ENCODE measurements at regions of chr14 and their contacts with region 1.

Region 1: DNA sequence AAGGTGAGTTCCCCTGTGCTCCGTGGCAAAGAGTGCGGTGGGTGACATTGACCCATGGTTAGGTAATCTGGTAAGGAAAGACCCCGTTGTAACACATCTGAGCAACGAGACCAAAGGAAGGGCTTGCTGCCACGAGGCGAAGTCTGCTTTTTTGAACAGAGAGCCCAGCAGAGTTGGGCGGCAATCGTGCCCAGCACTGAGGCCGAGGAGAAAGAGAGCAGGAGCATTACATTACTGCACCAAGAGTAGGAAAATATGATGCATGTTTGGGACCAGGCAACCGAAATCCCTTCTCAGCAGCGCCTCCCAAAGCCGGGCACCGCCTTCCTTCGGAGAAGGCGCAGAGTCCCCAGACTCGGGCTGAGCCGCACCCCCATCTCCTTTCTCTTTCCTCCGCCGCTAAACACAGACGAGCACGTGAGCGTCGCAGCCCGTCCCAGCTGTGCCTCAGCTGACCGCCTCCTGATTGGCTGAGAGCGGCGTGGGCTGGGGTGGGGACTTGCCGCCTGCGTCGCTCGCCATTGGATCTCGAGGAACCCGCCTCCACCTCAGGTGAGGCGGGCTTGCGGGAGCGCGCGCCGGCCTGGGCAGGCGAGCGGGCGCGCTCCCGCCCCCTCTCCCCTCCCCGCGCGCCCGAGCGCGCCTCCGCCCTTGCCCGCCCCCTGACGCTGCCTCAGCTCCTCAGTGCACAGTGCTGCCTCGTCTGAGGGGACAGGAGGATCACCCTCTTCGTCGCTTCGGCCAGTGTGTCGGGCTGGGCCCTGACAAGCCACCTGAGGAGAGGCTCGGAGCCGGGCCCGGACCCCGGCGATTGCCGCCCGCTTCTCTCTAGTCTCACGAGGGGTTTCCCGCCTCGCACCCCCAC is at the start of gene HIF1A:
- DNase-seq: peak; percentile 96 to 97
- ATAC-seq: peak; percentile 97 to 99 (median 98)
- H3K4me3 ChIP-seq: peak within 1 kb of the TSS; percentile 70 to 99 (median 88)
- H3K27ac ChIP-seq: peak within 1 kb of the TSS; percentile 72 to 100 (median 96)
- H3K4me1 ChIP-seq: peaks cover 0 to 43% (median 33%) of the 10 kb centered on the region in 9 donors
- H3K27me3 ChIP-seq: no peaks in the 10 kb centered on the region
- CTCF ChIP-seq: peak in 3 of 9 donors; percentile 16 to 24 (median 19)
- total RNA-seq, gene HIF1A: 52.8 to 97.3 (median 62.9) TPM

Region 2: DNA sequence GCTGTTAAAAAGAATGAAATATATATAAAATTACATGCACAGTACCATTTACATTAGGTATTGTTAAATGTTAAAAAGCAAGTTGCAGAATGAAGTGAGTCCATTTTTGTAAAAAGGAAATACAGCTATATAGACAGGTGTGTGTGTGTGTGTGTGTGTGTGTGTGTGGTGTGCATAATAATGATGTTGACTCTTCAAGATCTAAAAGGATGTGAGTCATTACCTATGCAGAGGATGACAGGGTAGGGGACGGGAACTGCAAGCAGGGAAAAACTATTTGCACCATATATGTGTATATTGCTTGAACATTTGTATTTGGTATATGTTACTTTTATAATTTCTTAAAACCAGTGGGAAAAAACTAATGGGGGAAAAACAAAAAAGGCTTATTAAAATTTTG is 1212.3 kb before region 1 on chr14:
- intact Hi-C with region 1: no loop called
- DNase-seq: no peak
- ATAC-seq: no peak
- H3K4me3 ChIP-seq: no peak overlapping the region
- H3K27ac ChIP-seq: no peak overlapping the region
- H3K4me1 ChIP-seq: peaks cover 0 to 10% (median 6%) of the 10 kb centered on the region in 9 donors
- H3K27me3 ChIP-seq: peaks cover 12 to 68% (median 50%) of the 10 kb centered on the region in 7 donors
- CTCF ChIP-seq: no peak

Region 3: GRCh38 chr14:61512026-61512834 is 182.8 kb before region 1 on chr14:
- intact Hi-C with region 1: loop called in 1 of 10 experiments (anchors 5 kb)
- DNase-seq: no peak
- ATAC-seq: peak in 2 of 8 donors; percentile 36 to 52
- H3K4me3 ChIP-seq: no peak overlapping the region
- H3K27ac ChIP-seq: peak overlapping the region in 4 of 10 donors; percentile 10 to 62 (median 14)
- H3K4me1 ChIP-seq: peaks cover 9 to 84% (median 43%) of the 10 kb centered on the region in 9 donors
- H3K27me3 ChIP-seq: no peaks in the 10 kb centered on the region
- CTCF ChIP-seq: no peak

Region 4: GRCh38 chr14:61553725-61554641 is 141.1 kb before region 1 on chr14:
- intact Hi-C with region 1: no loop called
- DNase-seq: no peak
- ATAC-seq: peak in 2 of 8 donors; percentile 26 to 43
- H3K4me3 ChIP-seq: no peak overlapping the region
- H3K27ac ChIP-seq: peak overlapping the region in 8 of 10 donors; percentile 52 to 92 (median 72)
- H3K4me1 ChIP-seq: peaks cover 0 to 58% (median 21%) of the 10 kb centered on the region in 9 donors
- H3K27me3 ChIP-seq: no peaks in the 10 kb centered on the region
- CTCF ChIP-seq: no peak

Region 5: DNA sequence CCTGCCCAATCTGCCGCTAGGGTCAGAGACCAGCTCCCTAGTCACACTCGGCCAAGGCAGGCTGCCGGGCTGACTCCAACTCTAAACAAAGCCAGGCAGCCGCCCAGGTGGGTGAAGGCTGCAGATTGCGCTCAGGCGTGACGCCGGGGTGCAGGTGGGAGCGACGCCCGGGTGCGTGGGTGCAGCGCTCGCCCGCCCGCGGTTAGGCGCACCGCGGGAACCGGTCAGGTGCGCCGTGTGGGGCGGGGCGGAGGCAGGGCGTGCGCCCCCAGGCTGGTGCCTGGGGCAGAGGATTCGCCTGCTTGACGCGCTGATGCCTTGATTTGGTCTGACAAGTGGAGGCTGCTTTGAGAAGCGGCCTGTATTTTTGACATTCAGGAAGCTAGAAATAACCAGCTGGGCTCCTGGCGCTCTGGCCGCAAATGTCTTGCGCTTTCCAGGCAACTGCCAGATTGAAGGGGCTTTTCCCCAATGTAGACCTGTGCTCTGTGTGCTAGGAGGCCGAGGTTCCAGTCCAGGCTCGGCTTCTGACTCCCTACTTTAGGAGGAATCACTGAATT is 126.4 kb before region 1 on chr14:
- intact Hi-C with region 1: loop called in 4 of 10 experiments (anchors 2 to 10 kb)
- DNase-seq: peak in 1 of 2 donors; percentile 37
- ATAC-seq: peak; percentile 49 to 84 (median 64)
- H3K4me3 ChIP-seq: peak overlapping the region in 8 of 10 donors; percentile 7 to 44 (median 38)
- H3K27ac ChIP-seq: peak overlapping the region; percentile 50 to 91 (median 77)
- H3K4me1 ChIP-seq: peaks cover 9 to 100% (median 53%) of the 10 kb centered on the region in 9 donors
- H3K27me3 ChIP-seq: no peaks in the 10 kb centered on the region
- CTCF ChIP-seq: peak in 3 of 9 donors; percentile 16 to 24 (median 24)

Region 6: GRCh38 chr14:61609191-61609843 is 85.7 kb before region 1 on chr14:
- intact Hi-C with region 1: loop called in 1 of 10 experiments (anchors 10 kb)
- DNase-seq: no peak
- ATAC-seq: peak; percentile 27 to 84 (median 58)
- H3K4me3 ChIP-seq: no peak overlapping the region
- H3K27ac ChIP-seq: peak overlapping the region in 3 of 10 donors; percentile 35 to 58 (median 41)
- H3K4me1 ChIP-seq: peaks cover 0 to 30% (median 15%) of the 10 kb centered on the region in 9 donors
- H3K27me3 ChIP-seq: no peaks in the 10 kb centered on the region
- CTCF ChIP-seq: no peak

Region 7: DNA sequence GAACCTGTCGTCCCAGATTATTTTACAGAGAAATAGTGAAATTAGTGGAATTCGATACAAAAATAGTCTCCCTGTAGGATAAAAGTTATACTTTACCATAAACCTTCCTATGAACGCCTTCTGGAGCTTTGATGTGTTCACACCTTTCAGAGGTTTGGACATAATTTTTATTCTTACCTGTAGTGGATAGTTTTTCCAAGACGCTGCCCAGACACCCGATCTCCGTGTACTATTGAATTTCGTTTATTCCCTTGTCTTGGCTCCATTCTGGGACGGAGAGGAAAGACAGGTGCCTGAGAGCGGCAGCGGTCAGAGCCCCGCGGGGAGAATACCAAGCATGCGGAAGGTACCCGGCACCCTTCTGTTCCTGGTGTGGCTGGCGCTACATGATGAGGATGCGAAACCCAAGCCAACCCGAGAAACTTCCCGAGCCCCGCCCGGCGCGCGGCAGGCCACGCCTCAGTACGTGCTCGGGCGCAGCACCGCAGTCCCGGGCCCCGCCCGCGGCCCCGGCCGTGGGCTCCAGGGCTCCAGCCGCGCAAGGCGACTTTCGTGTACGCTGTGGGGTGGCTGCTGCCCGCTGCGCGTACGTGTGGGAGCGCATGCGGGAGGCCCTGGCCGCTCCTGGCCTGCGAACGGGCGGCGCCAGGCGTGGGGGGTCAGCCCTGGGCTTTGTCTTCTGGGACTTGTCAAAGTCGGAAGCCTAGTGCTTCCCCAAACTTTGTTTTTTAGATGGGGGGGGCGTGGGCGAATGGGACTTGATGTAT is 55.8 kb after region 1 on chr14:
- intact Hi-C with region 1: loop called in 1 of 10 experiments (anchors 5 kb)
- DNase-seq: peak; percentile 88 to 90
- ATAC-seq: peak; percentile 96 to 98 (median 98)
- H3K4me3 ChIP-seq: peak overlapping the region; percentile 3 to 82 (median 65)
- H3K27ac ChIP-seq: peak overlapping the region; percentile 87 to 97 (median 93)
- H3K4me1 ChIP-seq: peaks cover 0 to 63% (median 36%) of the 10 kb centered on the region in 9 donors
- H3K27me3 ChIP-seq: no peaks in the 10 kb centered on the region
- CTCF ChIP-seq: no peak

Region 8: GRCh38 chr14:61803755-61804154 is 108.7 kb after region 1 on chr14:
- intact Hi-C with region 1: no loop called
- DNase-seq: no peak
- ATAC-seq: no peak
- H3K4me3 ChIP-seq: no peak overlapping the region
- H3K27ac ChIP-seq: no peak overlapping the region
- H3K4me1 ChIP-seq: no peaks in the 10 kb centered on the region
- H3K27me3 ChIP-seq: no peaks in the 10 kb centered on the region
- CTCF ChIP-seq: no peak